ENCODE measurements at regions of chr3 and their contacts with region 1.

Region 1: GRCh38 chr3:182713743-182714517 is 79.4 kb upstream of the ATP11B start:
- DNase-seq: no peak
- ATAC-seq: peak; percentile 76
- H3K4me3 Mint-ChIP-seq: no peak overlapping the region
- H3K27ac Mint-ChIP-seq: no peak overlapping the region
- H3K4me1 Mint-ChIP-seq: peaks cover 10% of the 10 kb centered on the region
- H3K27me3 Mint-ChIP-seq: no peaks in the 10 kb centered on the region
- CTCF ChIP-seq: peak; percentile 35; the same call in 1 of the 2 replicates

Region 2: DNA sequence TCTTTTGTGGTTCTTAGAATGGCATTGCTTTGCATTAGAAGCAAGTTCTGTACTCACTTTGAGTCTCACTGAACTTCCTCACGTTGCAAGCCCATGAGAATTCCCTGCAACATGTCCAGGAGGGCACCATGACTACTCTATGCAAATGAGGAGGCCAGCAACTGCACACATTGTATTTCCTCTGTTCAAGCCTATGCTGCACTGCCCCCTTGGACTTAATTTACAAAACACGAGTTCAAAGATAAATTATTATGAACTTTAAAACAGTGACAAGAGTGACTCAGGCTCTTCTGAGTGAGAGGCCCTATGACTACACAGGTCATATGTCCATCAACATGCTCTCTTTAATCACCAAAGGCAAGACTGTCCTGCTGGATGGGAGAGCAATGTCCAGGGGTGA is 404.8 kb before region 1 on chr3:
- CTCF ChIA-PET with region 1: no interaction called
- POLR2A ChIA-PET with region 1: no interaction called
- DNase-seq: no peak
- ATAC-seq: no peak
- H3K4me3 Mint-ChIP-seq: no peak overlapping the region
- H3K27ac Mint-ChIP-seq: no peak overlapping the region
- H3K4me1 Mint-ChIP-seq: peaks cover 8% of the 10 kb centered on the region
- H3K27me3 Mint-ChIP-seq: no peaks in the 10 kb centered on the region
- CTCF ChIP-seq: no peak

Region 3: DNA sequence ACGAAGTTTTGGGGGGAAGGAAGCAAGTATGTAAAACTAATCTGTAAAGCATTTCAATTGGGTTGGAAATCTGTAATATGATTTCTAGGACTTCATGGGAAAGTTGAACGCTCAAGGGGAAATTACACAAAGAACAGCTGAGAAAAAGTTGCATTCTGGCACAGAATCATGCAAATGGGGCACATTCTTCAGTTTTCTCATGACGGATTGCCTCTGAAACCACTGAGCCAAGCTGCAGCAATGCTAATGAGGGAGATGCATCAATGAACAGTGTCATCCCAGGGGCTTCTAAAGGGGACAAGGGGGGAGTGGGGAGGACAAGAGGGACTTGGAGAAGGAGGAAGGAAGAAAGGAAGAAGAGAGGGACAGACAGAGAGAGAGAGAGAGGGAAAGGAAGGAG is 212.1 kb before region 1 on chr3:
- CTCF ChIA-PET with region 1: no interaction called
- POLR2A ChIA-PET with region 1: no interaction called
- DNase-seq: no peak
- ATAC-seq: no peak
- H3K4me3 Mint-ChIP-seq: peak overlapping the region; percentile 5; the same call in 1 of the 2 replicates
- H3K27ac Mint-ChIP-seq: peak overlapping the region; percentile 32
- H3K4me1 Mint-ChIP-seq: peaks cover 52% of the 10 kb centered on the region
- H3K27me3 Mint-ChIP-seq: no peaks in the 10 kb centered on the region
- CTCF ChIP-seq: no peak

Region 4: GRCh38 chr3:182837855-182838454 is 124.0 kb after region 1 on chr3:
- CTCF ChIA-PET with region 1: interaction called, 33 read pairs
- POLR2A ChIA-PET with region 1: no interaction called
- DNase-seq: no peak
- ATAC-seq: no peak
- H3K4me3 Mint-ChIP-seq: no peak overlapping the region
- H3K27ac Mint-ChIP-seq: no peak overlapping the region
- H3K4me1 Mint-ChIP-seq: no peaks in the 10 kb centered on the region
- H3K27me3 Mint-ChIP-seq: no peaks in the 10 kb centered on the region
- CTCF ChIP-seq: no peak

Region 5: GRCh38 chr3:182909318-182910040 is 195.5 kb after region 1 on chr3:
- CTCF ChIA-PET with region 1: interaction called, 17 read pairs
- POLR2A ChIA-PET with region 1: no interaction called
- DNase-seq: no peak
- ATAC-seq: peak; percentile 53
- H3K4me3 Mint-ChIP-seq: no peak overlapping the region
- H3K27ac Mint-ChIP-seq: no peak overlapping the region
- H3K4me1 Mint-ChIP-seq: no peaks in the 10 kb centered on the region
- H3K27me3 Mint-ChIP-seq: no peaks in the 10 kb centered on the region
- CTCF ChIP-seq: peak; percentile 52

Measured in WTC11 (cell line).